PC-9 (cell line): ENCODE measurements at regions of chr15 and their contacts with region 1.

Region 1: DNA sequence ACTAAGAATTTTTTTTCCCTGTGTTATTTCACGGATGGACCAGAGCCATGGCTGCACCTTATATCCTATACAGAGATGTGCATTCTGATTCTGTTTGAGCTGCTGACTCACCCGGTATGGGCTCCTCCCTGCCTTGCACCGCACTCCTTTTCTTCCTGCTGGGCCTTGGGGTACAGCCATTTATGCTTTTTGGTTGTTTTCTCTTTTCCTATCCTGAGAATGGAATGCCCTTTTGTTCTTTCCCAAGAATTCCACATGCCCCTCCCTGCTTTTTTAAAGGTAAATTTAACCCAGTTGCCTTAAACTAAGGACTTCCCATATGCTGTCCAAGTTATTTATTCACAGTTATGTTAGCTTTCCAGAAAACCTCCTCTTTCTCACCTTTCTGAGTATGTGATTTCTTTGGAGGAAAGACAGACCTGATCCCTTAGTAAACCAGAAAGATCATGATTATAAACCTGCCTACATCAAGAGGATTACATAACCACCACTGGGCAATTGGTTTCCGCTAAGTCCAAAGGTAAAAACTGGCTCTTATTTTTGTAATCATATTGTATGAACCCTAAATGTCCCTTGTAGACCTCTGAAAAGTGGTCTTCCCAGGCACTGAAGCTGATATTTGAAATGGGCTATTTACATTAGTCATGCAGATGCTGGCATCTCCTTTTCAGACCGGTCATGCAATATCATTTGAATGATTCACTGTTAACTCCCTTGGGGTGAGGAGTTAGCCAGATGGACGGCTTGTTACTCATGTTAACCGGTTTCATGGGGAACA is 45.5 kb downstream of the TMOD3 start:
- DNase-seq: peak; percentile 83 to 96
- H3K4me3 ChIP-seq: peak overlapping the region; percentile 34; the same call in 1 of the 2 replicates
- H3K27ac ChIP-seq: peak overlapping the region; percentile 100
- H3K4me1 ChIP-seq: peaks cover 60% of the 10 kb centered on the region
- H3K27me3 ChIP-seq: no peaks in the 10 kb centered on the region
- CTCF ChIP-seq: no peak

Region 2: DNA sequence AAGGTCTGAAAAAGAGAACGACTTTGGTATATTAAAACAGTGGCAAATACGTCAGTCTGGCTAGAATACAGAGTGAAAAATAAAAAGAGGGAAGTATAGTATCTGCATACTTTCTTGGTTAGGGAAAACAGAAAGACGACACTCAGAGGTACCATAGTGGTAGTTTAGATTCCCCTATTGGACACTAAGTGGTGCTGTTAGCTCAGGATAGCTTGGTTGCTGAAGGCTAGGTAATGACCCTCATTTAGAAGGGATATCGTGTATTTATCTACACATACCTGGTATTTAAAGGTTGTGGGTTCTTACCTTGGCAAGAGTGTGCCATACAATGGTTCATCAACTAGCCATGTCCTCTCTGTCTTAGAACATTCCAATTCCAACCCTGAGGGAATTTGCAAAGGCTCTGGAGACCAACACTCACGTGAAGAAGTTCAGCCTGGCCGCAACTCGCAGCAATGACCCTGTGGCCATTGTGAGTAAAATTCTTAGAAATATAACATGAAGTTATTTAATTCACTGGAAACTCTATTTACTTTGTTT is 92.5 kb before region 1 on chr15:
- CTCF ChIA-PET with region 1: no interaction called
- POLR2A ChIA-PET with region 1: no interaction called
- intact Hi-C with region 1: loop called (anchors 1 kb)
- DNase-seq: peak; percentile 7 to 52
- H3K4me3 ChIP-seq: no peak overlapping the region
- H3K27ac ChIP-seq: no peak overlapping the region
- H3K4me1 ChIP-seq: peaks cover 17% of the 10 kb centered on the region
- H3K27me3 ChIP-seq: no peaks in the 10 kb centered on the region
- CTCF ChIP-seq: peak; percentile 66

Region 3: GRCh38 chr15:51829360-51830275 is 45.3 kb before region 1 on chr15 and contains the start of gene TMOD3:
- CTCF ChIA-PET with region 1: no interaction called
- POLR2A ChIA-PET with region 1: interaction called, 4 read pairs
- intact Hi-C with region 1: loop called (anchors 1 kb)
- DNase-seq: peak; percentile 77 to 91
- H3K4me3 ChIP-seq: peak within 1 kb of the TSS; percentile 71
- H3K27ac ChIP-seq: peak within 1 kb of the TSS; percentile 97
- H3K4me1 ChIP-seq: peaks cover 69% of the 10 kb centered on the region
- H3K27me3 ChIP-seq: no peaks in the 10 kb centered on the region
- CTCF ChIP-seq: no peak
- total RNA-seq, gene TMOD3: 94.9 and 125 TPM in 2 replicates

Region 4: DNA sequence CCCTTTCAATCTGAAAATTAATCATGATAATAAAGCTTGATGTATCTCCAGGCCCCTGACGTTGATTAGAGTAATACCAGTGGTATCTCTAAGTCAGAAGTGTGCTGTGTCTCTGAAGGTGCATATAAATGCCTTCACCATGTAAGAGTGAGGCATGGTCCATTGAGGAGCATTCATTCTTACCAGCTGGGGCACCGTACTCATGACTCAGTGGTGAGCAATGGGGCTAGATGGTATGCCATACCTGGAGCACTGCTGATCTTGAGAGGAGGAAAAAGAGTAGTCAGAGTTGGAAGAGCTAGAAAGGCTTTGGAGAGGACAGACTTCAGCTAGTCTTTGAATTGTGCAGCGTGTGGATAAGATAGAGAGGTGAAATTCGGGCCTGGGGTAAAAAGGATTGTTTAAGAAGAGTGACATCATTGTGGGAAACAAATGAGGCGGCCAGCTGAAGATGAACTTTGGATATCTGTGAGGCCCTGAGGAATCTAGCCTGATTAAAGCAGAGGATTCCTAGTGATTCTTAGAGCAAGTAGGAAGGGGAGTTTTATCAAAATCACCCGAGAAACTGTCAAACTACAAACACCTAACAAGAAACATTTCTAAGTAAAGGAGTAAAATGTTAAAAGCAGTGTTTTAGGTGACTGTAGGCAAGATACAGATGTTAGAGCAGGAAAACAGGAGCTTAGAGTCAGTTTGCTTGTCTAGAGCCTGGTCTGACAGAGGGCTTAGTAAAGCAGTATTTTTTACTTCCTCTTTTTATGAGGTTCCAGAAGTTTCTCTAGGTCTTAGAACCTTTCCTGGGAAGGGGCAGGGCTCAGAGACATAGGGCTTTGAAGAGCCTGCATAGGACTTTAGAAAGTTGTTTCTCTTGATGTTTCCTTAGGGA is 31.8 kb before region 1 on chr15:
- CTCF ChIA-PET with region 1: interaction called, 4 read pairs
- POLR2A ChIA-PET with region 1: no interaction called
- intact Hi-C with region 1: loop called (anchors 1 kb)
- DNase-seq: peak; percentile 48 to 57
- H3K4me3 ChIP-seq: no peak overlapping the region
- H3K27ac ChIP-seq: peak overlapping the region; percentile 98
- H3K4me1 ChIP-seq: peaks cover 60% of the 10 kb centered on the region
- H3K27me3 ChIP-seq: no peaks in the 10 kb centered on the region
- CTCF ChIP-seq: no peak

Region 5: GRCh38 chr15:51907136-51907914 is 32.4 kb after region 1 on chr15:
- CTCF ChIA-PET with region 1: interaction called, 15 read pairs
- POLR2A ChIA-PET with region 1: interaction called, 5 read pairs
- intact Hi-C with region 1: loop called (anchors 1 kb)
- DNase-seq: peak; percentile 83 to 97
- H3K4me3 ChIP-seq: peak overlapping the region; percentile 26; the same call in 1 of the 2 replicates
- H3K27ac ChIP-seq: peak overlapping the region; percentile 69
- H3K4me1 ChIP-seq: peaks cover 27% of the 10 kb centered on the region
- H3K27me3 ChIP-seq: no peaks in the 10 kb centered on the region
- CTCF ChIP-seq: peak; percentile 60

Region 6: GRCh38 chr15:52018693-52019387 is 143.9 kb after region 1 on chr15 and contains the start of gene MAPK6:
- CTCF ChIA-PET with region 1: no interaction called
- POLR2A ChIA-PET with region 1: interaction called, 10 read pairs
- intact Hi-C with region 1: no loop called
- DNase-seq: peak; percentile 67 to 90
- H3K4me3 ChIP-seq: peak within 1 kb of the TSS; percentile 99
- H3K27ac ChIP-seq: peak within 1 kb of the TSS; percentile 83
- H3K4me1 ChIP-seq: peaks cover 16% of the 10 kb centered on the region
- H3K27me3 ChIP-seq: no peaks in the 10 kb centered on the region
- CTCF ChIP-seq: no peak
- total RNA-seq, gene MAPK6: 27.5 and 38.7 TPM in 2 replicates